ENCODE measurements at regions of chr7 and their contacts with region 1.

Region 1: DNA sequence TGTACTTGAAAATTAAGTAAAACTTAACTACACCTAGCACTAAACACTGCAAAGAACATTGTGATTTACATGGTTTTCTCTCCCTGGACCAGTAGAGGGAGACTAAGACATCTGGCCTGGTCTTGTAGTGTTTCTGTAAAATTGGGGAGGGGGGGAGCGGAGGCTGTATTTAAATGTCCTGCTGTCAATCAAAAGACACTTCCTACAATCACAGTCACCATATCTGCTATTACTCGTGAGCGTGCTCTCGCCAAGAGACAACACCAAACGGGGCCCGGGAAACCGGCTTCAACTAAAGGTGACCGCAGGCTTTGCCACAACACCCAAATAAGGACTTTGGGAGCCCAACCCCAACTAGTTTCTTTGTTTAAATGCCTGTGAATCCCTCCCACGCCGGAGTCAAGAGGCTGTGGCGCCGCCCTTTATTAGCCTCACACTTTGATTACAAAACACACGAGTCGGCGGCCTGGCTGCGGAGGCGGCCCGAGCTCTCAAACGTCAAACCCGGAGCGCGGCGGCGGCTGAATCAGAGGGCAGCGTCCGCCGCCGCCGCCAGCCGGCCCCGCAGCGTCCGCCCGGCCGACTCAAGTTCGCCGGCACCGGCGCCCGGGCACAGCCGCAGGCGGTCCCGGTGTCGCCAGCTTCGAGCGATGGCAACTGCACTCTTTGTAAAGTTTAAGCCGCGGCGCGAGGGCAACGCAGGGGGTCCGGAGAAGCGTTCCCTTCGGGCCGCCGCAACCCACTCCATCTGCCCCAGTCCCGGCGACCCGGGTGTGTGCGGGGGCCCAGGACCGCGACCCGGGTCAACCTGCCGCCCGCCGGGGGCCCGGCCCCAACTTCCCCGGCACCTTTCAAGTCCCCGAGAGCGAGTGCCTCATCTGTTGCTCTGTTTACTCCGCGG is 1.3 kb downstream of the KDM7A start:
- DNase-seq: peak; percentile 51 to 94 (median 68)

Region 2: DNA sequence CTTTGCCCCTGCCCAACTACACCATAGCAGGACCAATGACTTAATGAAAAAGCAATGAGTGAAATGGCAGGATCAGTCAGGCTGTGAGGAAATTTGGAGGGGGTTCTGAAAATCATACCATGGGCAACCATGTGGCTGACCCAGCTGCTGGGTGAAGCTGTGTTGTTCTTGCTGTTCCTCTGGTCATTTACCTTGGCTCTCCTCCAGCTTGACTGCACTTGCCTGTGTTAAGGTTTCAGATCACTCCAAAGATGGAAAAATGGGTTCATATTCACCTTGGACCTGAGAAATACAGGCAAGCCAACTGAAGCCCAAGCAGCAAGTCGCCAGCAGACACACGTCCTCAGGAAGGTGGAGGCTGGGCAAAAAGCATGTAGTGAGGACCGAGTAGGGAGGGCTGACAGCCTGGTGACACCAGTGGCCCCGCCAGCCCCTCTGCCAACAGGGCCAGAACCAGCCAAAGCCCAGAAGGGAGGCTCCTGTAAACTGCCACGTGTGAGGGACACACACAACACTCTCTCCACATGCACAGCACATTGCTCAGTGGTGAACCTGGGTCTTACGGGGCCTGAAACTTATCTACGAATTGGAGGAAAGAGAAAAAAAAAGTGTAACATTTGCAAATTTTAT is 152.8 kb before region 1 on chr7:
- intact Hi-C with region 1: no loop called
- DNase-seq: peak in 1 of 10 donors; percentile 54

Region 3: DNA sequence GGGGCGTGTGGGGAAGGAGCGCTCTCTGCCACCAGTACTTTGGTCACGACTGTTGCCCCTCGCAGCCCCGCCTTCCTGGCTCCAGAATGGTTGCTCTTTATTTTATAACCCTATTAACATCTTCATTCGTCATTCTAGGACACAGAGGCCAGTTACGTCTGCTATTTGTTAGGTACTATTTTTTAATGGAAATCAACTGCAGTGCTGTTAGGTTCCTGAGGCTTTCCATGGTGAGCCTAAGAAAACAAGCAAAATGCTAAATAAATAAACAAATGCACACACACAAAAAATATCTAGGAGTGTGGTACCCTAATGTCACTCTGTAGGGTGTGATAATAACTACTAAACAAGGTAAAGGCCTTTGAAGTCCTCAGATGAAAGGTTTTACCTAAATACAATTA is 151.8 kb after region 1 on chr7:
- intact Hi-C with region 1: loop called (anchors 1 kb)
- DNase-seq: no peak